ENCODE measurements at regions of chr3 and their contacts with region 1.

Region 1: DNA sequence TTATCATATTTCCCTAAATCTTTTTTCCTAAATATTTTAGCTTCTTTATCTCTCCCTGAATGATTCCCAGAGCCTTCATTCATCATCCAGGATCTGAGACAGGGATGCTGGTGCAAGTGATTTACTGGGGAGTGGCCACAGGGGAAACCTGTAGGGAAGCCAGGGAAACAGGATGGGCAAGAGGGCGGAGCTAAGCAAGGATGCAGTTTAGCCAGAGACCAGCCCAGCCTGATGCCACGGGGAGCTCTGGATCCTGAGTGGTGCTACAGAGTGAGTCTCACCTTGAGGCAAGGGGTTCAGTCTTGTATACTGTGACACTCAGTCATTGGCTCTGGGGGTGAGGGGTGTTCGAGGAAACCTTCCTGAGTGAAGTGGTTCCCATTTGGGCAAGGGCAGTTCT is 39.7 kb upstream of the LRRFIP2 start:
- DNase-seq: no peak
- ATAC-seq: no peak
- H3K4me3 Mint-ChIP-seq: no peak overlapping the region
- H3K27ac Mint-ChIP-seq: no peak overlapping the region
- H3K4me1 Mint-ChIP-seq: peaks cover 12% of the 10 kb centered on the region
- H3K27me3 Mint-ChIP-seq: no peaks in the 10 kb centered on the region

Region 2: GRCh38 chr3:37024092-37024491 is 190.0 kb before region 1 on chr3:
- CTCF ChIA-PET with region 1: interaction called, 13 read pairs
- DNase-seq: no peak
- ATAC-seq: no peak
- H3K4me3 Mint-ChIP-seq: no peak overlapping the region
- H3K27ac Mint-ChIP-seq: no peak overlapping the region
- H3K4me1 Mint-ChIP-seq: peaks cover 5% of the 10 kb centered on the region
- H3K27me3 Mint-ChIP-seq: no peaks in the 10 kb centered on the region